ENCODE measurements at regions of chr19 and their contacts with region 1.

Region 1: GRCh38 chr19:58499021-58499927 is 12.5 kb downstream of the SLC27A5 start:
- DNase-seq: peak; percentile 99
- H3K4me3 Mint-ChIP-seq: peak overlapping the region; percentile 96
- H3K27ac Mint-ChIP-seq: peak overlapping the region; percentile 99
- H3K4me1 Mint-ChIP-seq: peaks cover 25% of the 10 kb centered on the region
- H3K27me3 Mint-ChIP-seq: no peaks in the 10 kb centered on the region

Region 2: GRCh38 chr19:58439576-58440554 is 59.4 kb before region 1 on chr19 and contains the start of gene ZNF132:
- intact Hi-C with region 1: loop called (anchors 1 kb)
- DNase-seq: peak; percentile 98
- H3K4me3 Mint-ChIP-seq: peak within 1 kb of the TSS; percentile 97
- H3K27ac Mint-ChIP-seq: peak within 1 kb of the TSS; percentile 97
- H3K4me1 Mint-ChIP-seq: peaks cover 21% of the 10 kb centered on the region
- H3K27me3 Mint-ChIP-seq: no peaks in the 10 kb centered on the region
- total RNA-seq, gene ZNF132: 3.6 and 3.8 TPM in 2 replicates

Region 3: DNA sequence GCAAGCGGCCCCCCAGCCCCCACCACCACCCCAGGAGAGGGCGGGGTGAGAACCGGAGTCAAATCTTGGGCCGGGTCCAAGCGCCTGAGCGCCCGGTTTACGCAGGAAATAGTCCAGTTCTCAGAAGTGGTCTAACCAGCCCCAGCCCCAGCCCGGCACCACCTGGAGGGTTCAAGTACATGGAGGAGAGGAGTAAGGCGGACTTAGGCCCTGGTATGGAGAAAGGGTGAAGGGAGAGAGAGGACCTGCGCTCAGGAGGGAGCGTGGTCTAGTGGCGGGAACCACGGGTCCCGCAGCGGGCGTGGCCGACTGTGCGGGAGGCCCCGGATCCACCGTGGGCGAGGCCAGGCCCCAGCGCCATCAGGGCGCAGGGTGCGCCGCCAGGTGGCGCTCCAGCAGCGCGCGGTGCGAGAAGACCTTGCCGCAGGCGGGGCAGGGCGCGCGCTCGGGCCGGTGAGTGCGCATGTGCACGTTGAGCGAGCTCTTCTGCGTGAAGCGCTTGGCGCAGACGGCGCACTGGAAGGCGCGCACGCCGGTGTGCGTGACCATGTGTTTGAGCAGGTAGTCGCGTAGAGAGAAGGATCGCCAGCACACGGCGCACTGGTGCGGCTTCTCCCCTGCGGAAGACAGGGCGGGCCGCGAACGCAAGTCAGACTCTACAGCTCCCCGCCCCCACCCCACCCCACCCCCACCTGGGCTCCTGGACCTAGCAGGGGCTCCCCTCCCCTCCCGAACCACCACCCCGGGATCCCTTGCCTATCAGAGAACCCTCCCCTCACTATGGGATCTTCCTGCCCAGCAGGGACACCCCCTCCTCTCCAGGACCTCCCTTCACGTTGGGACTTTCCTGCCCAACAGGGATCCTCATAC is 14.7 kb after region 1 on chr19:
- intact Hi-C with region 1: loop called (anchors 1 kb)
- DNase-seq: peak; percentile 99
- H3K4me3 Mint-ChIP-seq: peak overlapping the region; percentile 91
- H3K27ac Mint-ChIP-seq: peak overlapping the region; percentile 93
- H3K4me1 Mint-ChIP-seq: peaks cover 32% of the 10 kb centered on the region
- H3K27me3 Mint-ChIP-seq: no peaks in the 10 kb centered on the region

Region 4: GRCh38 chr19:58543826-58544590 is 44.7 kb after region 1 on chr19 and contains the start of gene TRIM28:
- intact Hi-C with region 1: loop called (anchors 1 kb)
- DNase-seq: peak; percentile 100
- H3K4me3 Mint-ChIP-seq: peak within 1 kb of the TSS; percentile 94
- H3K27ac Mint-ChIP-seq: peak within 1 kb of the TSS; percentile 99
- H3K4me1 Mint-ChIP-seq: peaks cover 29% of the 10 kb centered on the region
- H3K27me3 Mint-ChIP-seq: peaks cover 23% of the 10 kb centered on the region
- total RNA-seq, gene TRIM28: 689 and 698 TPM in 2 replicates

Region 5: DNA sequence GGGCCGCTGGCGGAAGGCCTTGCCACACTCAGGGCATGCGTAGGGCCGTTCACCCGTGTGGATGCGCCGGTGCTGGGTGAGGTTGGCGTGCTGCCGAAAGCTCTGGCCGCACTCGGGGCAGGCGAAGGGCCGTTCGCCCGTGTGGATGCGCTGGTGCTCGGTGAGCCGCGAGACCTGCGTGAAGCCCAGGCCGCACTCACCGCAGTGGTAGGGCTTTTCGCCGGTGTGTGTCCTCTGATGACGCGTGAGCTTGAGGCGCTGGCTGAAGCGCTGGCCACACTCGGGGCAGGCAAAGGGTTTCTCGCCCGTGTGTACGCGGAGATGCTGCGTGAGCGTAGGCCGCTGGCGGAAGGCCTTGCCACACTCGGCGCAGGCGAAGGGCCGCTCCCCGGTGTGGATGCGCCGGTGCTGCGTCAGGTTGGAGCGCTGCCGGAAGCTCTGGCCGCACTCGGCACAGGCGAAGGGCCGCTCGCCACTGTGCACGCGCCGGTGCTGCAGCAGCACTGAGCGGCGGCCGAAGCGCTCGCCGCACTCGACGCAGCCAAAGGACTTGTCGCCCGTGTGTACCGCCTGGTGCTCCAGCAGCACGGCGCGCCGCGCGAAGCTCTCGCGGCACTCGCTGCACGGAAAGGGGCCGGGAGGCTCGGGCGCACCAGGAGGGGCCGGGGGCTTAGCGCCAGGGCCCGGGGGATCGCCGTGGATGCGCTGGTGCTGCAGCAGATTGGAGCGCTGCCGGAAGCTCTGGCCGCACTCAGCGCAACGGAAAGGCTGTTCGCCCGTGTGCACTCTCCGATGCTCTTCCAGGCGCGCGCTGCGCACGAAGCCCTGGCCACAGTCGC is 63.1 kb after region 1 on chr19:
- intact Hi-C with region 1: no loop called
- DNase-seq: peak; percentile 87
- H3K4me3 Mint-ChIP-seq: peak overlapping the region; percentile 86
- H3K27ac Mint-ChIP-seq: peak overlapping the region; percentile 98
- H3K4me1 Mint-ChIP-seq: peaks cover 44% of the 10 kb centered on the region
- H3K27me3 Mint-ChIP-seq: no peaks in the 10 kb centered on the region